HEK293T (cell line): ENCODE measurements at regions of chr11 and their contacts with region 1.

Region 1: GRCh38 chr11:118202599-118203422 is 22.0 kb downstream of the JAML start:
- DNase-seq: no peak

Region 2: DNA sequence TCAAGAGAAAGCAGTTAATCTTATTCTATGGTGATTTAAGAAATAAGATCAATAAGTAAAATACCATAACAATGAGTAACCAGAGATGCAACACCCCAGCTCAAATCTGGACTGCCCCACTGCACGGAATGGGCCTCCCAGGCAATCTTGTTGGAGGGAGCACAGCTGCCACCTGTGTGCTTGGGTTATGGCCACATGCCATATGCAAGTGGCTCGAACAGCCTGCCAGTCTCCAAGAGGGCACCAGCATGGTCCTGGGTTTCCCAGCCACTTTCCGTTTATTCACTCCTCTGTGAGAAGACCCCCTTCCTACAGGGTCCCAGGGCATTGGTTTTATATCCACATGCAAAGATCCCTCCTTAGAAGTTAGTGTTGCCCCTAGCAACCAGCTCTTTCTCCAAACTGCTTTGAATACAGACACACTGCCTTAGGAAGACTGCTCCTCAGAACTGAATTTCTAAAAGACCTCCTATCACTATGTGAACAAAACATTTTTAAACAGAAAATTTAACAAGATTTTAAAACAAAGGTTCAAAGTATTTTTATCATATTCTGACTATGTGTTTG is 1917.8 kb before region 1 on chr11:
- CTCF ChIA-PET with region 1: no interaction called
- POLR2A ChIA-PET with region 1: no interaction called
- DNase-seq: no peak

Region 3: DNA sequence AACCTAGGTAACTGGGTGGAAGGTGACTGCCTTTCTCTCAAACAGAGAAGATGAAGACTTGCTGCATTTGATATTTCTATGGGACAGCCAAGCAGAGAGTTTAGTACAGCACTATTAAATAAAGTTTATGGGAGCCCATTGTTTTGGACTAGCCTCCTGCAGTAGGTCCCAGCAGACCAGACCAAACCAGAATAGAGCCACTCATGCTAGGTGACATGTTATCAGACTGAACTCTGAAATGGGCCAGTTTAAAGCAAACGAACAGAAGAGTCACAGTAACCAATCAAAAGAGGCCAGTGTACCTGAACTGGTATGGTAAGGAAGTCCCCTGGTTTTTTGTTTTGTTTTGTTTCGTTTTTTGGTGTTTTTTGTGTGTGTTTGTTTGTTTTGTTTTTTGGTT is 69.2 kb after region 1 on chr11:
- CTCF ChIA-PET with region 1: no interaction called
- POLR2A ChIA-PET with region 1: no interaction called
- DNase-seq: no peak

Region 4: GRCh38 chr11:118353084-118353710 is 150.4 kb after region 1 on chr11:
- CTCF ChIA-PET with region 1: interaction called, 16 read pairs
- POLR2A ChIA-PET with region 1: no interaction called
- DNase-seq: no peak

Region 5: DNA sequence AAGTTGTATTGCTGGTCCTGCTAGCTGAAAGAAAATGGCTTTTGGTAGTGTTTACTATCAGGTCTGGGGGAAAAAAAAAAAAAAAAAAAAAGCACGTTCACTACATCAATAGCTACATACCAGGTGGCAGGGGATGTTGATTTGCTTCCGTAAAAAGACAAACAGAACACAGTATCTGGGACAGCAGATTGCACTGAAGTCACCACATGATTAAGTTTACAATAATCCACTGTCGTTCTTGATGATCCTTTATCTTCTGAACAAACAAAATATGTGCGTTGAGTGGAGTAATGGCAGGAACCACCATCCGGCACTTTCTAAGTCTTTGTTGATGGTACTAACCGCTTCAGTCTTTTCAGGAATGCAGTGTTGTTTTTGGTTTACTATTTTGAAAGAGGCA is 539.5 kb after region 1 on chr11:
- CTCF ChIA-PET with region 1: no interaction called
- POLR2A ChIA-PET with region 1: no interaction called
- DNase-seq: no peak